ENCODE measurements at regions of chr6 and their contacts with region 1.

Region 1: DNA sequence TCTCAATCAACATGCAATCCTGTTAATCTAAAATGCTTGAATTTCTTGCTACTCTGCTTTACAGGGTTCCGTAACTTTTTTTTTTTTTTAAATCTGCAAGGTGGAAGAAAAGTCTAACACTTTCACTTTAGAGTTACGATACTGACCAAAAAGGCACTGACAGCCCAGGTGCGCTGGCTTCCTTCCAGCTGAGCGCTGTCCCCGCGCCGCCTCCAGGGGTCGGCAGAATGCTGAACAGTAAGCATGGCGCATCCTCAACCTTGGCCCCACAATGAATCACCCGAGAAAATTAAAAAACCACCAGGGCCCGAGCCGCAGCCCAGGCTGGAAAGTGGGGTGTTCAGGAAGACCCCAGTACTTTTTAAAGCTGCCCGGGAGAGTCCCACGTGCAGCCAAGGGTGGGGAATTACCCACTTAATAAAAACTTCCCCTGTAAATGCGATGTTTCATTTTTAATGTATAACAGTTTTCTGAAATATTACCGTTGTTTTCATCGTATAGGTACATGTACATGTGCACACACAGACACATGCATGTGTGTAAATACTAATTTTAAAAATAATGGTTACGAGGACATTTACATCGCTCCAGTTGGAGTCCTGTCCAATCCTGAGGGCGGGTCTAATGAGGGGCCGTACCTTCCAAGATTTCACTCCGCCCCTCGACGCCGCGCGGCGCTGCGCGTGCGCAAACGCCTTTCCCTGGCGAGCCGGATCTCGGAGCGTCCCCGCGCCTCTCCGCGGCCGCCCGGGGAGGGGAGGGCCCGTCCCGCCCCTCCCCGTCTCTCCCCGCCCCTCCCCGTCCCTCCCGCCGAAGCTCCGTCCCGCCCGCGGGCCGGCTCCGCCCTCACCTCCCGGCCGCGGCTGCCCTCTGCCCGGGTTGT is at the start of gene GINM1:
- DNase-seq: peak; percentile 94 to 97 (median 96)
- H3K4me3 ChIP-seq: peak within 1 kb of the TSS; percentile 61 to 94
- H3K4me3 Mint-ChIP-seq: peak within 1 kb of the TSS; percentile 94 to 98 (median 96)
- H3K27ac ChIP-seq: peak within 1 kb of the TSS; percentile 93
- H3K27ac Mint-ChIP-seq: peak within 1 kb of the TSS; percentile 96 to 99 (median 98)
- H3K4me1 ChIP-seq: peaks cover 25% of the 10 kb centered on the region
- H3K4me1 Mint-ChIP-seq: peaks cover 8 to 29% (median 15%) of the 10 kb centered on the region in 4 donors
- H3K27me3 ChIP-seq: no peaks in the 10 kb centered on the region
- H3K27me3 Mint-ChIP-seq: peaks cover 0 to 1% of the 10 kb centered on the region in 2 donors
- total RNA-seq, gene GINM1: 17.1 to 18.5 TPM

Region 2: DNA sequence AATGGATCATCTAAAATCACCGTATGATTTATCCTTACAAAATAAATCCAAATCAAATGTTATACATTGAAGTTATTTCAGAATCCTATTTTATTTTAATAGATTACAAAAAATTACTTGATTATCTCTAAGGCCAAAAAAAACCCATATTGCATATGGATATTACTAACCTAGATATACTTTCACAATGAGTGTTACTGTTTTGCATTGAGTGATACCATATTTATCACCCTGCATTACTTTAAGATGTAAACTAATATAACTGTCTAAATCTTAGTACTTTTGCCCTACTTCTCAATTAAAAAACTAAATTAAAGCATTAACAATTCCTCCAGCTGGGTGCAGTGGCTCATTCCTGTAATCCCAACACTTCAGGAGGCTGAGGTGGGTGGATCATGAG is 31.0 kb before region 1 on chr6:
- CTCF ChIA-PET with region 1: no interaction called
- POLR2A ChIA-PET with region 1: no interaction called
- intact Hi-C with region 1: no loop called
- DNase-seq: no peak
- H3K4me3 ChIP-seq: no peak overlapping the region
- H3K4me3 Mint-ChIP-seq: no peak overlapping the region
- H3K27ac ChIP-seq: no peak overlapping the region
- H3K27ac Mint-ChIP-seq: no peak overlapping the region
- H3K4me1 ChIP-seq: no peaks in the 10 kb centered on the region
- H3K4me1 Mint-ChIP-seq: peaks cover 0 to 7% (median 6%) of the 10 kb centered on the region in 4 donors
- H3K27me3 ChIP-seq: no peaks in the 10 kb centered on the region
- H3K27me3 Mint-ChIP-seq: no peaks in the 10 kb centered on the region

Region 3: DNA sequence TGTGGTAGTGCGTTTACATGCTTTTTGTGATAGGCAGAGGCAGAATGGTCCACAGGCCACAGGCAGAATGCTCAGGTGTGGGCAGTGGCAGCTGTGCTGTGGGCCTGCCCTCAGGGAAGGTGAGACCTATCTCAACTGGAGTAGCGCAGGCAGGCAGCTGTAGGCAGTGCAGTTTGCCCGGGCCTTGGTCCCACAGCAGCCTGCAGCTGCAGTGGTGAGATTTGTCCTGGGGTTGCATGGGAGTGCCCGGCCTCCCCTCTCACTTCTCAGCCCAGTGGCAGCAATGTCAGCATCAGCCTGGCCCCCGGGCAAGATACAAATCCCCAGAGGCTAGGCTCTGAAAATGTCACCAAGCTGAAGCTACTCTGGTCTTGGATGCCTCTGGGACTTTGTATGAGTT is 13.8 kb before region 1 on chr6:
- CTCF ChIA-PET with region 1: interaction called, 30 read pairs
- POLR2A ChIA-PET with region 1: interaction called, 31 read pairs
- intact Hi-C with region 1: no loop called
- DNase-seq: no peak
- H3K4me3 ChIP-seq: no peak overlapping the region
- H3K4me3 Mint-ChIP-seq: no peak overlapping the region
- H3K27ac ChIP-seq: no peak overlapping the region
- H3K27ac Mint-ChIP-seq: no peak overlapping the region
- H3K4me1 ChIP-seq: no peaks in the 10 kb centered on the region
- H3K4me1 Mint-ChIP-seq: peaks cover 0 to 7% (median 2%) of the 10 kb centered on the region in 4 donors
- H3K27me3 ChIP-seq: peaks cover 9% of the 10 kb centered on the region
- H3K27me3 Mint-ChIP-seq: peaks cover 12 to 20% of the 10 kb centered on the region in 2 donors

Region 4: DNA sequence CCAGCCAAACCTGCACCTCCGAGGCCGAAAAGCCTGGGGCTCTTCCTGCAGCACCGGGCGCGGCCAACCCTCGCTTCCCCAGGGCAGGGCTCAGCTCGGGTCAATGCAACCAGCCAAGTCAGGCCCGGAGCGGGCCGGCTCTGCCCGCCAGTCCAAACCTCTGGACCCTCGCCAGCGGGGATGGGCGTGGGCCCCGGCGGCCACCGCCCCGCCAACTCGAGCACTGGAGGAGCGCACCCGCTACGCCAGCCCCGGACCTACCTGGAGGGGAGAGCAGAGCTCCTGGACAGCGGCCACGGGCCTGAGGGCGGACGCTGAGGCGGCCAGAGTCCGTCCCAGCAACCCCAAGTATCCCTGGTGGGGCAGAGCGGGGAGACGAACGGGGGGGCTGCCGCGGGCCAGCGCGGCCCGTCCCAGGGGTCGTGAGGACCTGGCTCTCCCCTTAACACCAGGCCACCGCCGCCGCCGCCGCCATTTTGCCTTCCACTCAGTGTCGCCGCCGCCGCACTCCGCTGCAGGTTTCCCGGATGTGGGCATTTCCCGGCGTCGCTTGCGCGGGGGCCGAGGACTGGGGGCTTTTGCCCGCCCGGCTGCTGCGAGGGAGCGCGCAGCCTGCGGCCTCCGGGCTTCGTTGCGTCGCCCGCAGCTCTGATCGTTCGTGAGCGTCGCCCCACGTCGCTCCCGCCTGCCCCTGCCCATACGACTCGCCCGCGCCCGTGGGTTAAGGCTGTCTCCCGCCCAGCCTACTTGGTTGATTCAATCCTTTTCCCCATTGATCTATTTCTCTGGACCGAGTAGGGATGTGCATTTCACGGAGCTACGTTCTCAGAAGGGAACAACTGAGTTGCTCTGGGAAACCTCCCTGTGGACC is 152.1 kb after region 1 on chr6 and contains the start of gene LATS1:
- CTCF ChIA-PET with region 1: no interaction called
- POLR2A ChIA-PET with region 1: interaction called, 18 read pairs
- intact Hi-C with region 1: loop called (anchors 1 kb)
- DNase-seq: peak; percentile 90 to 93 (median 91)
- H3K4me3 ChIP-seq: peak within 1 kb of the TSS; percentile 82 to 95
- H3K4me3 Mint-ChIP-seq: peak within 1 kb of the TSS; percentile 89 to 98 (median 94)
- H3K27ac ChIP-seq: peak within 1 kb of the TSS; percentile 94
- H3K27ac Mint-ChIP-seq: peak within 1 kb of the TSS; percentile 95 to 99 (median 97)
- H3K4me1 ChIP-seq: peaks cover 43% of the 10 kb centered on the region
- H3K4me1 Mint-ChIP-seq: peaks cover 26 to 54% (median 39%) of the 10 kb centered on the region in 4 donors
- H3K27me3 ChIP-seq: no peaks in the 10 kb centered on the region
- H3K27me3 Mint-ChIP-seq: no peaks in the 10 kb centered on the region
- total RNA-seq, gene LATS1: 47.4 to 51.8 TPM

Region 5: DNA sequence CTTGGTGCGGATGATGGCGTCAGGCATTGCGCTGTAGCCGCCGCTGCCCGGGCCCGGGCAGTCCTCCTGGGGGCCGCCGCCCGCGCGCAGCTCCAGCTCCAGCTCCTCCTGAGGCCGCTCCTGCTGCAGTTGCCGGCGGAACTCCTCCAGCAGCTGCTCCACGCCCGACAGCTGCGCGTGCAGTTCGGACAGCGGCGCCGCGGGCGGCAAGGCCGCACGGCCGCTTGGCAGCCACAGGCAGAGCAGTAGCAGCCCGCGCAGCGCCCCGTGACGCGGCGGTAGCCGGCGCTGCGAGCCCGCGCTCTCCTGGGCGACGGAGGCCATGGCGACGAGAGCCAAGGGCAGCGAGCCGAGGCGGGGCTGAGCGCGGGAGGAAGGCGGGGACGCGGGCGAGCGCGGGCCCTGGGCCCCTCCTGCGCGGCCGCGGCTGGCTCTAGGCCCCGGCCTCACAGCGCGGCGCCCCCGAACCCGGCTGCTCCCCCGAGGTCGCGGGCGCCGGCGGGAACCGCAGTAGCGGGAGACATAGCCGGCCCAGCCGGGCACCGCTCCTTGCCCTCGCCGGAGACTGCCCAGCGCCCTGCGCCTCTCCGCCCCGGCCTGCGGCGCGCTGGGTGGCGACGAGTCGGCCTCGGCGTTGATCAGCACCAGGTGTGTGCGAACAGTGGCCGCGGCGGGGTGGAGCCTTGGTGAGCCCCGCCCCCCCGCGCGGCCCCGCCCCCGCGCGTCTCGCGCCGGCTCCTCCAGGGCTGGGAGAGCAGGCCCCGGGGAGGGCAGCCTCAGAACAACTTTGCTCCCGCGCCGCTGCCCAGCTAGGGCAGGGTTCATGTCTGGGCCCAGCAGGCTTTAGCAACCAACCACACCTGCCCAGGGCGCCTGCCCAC is 298.2 kb after region 1 on chr6 and contains the start of gene LRP11:
- CTCF ChIA-PET with region 1: no interaction called
- POLR2A ChIA-PET with region 1: no interaction called
- intact Hi-C with region 1: loop called (anchors 1 kb)
- DNase-seq: peak; percentile 80 to 89 (median 85)
- H3K4me3 ChIP-seq: peak within 1 kb of the TSS; percentile 20 to 73
- H3K4me3 Mint-ChIP-seq: peak within 1 kb of the TSS; percentile 77 to 93 (median 84)
- H3K27ac ChIP-seq: peak within 1 kb of the TSS; percentile 29
- H3K27ac Mint-ChIP-seq: peak within 1 kb of the TSS; percentile 29 to 92 (median 79)
- H3K4me1 ChIP-seq: peaks cover 13% of the 10 kb centered on the region
- H3K4me1 Mint-ChIP-seq: peaks cover 3 to 23% (median 10%) of the 10 kb centered on the region in 4 donors
- H3K27me3 ChIP-seq: no peaks in the 10 kb centered on the region
- H3K27me3 Mint-ChIP-seq: peaks cover 0 to 5% of the 10 kb centered on the region in 2 donors
- total RNA-seq, gene LRP11: 3.6 to 5.6 TPM

Measured in CD4-positive, alpha-beta memory T cell (primary cell).